Breast epithelium (tissue), 4 donors: ENCODE measurements at regions of chr15 and their contacts with region 1.

Region 1: DNA sequence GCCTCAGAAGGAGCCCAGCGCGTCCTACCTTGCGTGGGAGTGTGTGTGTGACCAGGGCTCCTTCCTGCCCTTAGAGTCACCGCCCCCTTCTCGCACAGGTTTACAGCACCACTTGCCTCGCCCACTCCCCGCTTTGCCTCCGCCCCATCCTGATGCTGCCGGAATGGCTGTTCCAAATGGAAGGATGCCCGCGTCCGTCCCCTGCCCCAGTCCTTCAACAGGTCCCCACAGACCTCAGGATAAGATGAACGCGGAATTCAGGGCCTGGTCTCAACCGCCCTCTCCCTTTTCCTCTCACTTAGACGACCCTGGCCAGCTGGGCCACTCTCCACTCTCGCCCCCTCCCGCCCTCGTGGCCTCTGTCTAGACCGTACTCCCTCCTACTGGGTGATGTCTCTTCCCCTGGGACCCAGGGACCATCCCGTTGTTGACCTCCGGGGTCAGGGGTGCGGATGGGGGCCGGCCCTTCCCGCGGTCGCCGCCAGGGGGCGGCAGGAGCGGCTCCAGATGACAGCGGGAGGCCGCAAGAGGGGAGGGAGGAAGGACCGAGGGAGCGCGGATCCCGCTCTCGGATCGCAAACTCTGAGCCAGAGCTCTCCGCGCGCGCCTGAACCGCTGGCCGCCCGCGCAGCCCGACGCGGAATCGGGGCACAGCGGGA is at the start of gene THSD4:
- DNase-seq: peak; percentile 47 to 76
- H3K4me3 ChIP-seq: peak within 1 kb of the TSS; percentile 44 to 73 (median 66)
- H3K27ac ChIP-seq: peak within 1 kb of the TSS; percentile 81 to 90
- H3K4me1 ChIP-seq: no peaks in the 10 kb centered on the region
- H3K27me3 ChIP-seq: no peaks in the 10 kb centered on the region
- CTCF ChIP-seq: peak; percentile 96 to 98 (median 97)
- POLR2A ChIP-seq: no peak
- total RNA-seq, gene THSD4: 0.64 to 58.7 (median 41.3) TPM

Region 2: GRCh38 chr15:71349736-71350526 is 234.9 kb after region 1 on chr15:
- intact Hi-C with region 1: loop called (anchors 5 kb)
- DNase-seq: no peak
- H3K4me3 ChIP-seq: no peak overlapping the region
- H3K27ac ChIP-seq: no peak overlapping the region
- H3K4me1 ChIP-seq: no peaks in the 10 kb centered on the region
- H3K27me3 ChIP-seq: no peaks in the 10 kb centered on the region
- CTCF ChIP-seq: no peak
- POLR2A ChIP-seq: no peak

Region 3: DNA sequence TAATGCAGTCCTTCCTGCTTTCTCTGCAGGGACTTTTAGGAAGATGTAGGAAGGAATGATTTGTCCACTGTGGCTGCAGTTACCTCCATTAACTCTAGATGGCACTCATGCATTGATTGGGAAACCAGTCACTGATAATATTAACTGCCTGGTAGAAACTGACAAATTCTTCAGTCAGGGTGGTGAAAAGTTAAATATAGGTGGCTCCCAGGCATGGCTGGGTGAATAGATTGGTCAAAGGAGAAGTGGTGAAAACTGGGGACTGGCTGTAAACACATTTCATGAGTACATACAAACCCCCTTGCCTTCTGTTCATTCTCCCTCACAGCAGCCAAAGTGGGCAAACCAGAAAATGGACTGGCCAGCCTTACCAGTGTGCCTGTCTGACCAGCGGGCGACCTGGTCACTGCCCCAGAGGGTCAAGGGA is 333.7 kb after region 1 on chr15:
- intact Hi-C with region 1: loop called (anchors 10 kb)
- DNase-seq: peak in 1 of 2 donors; percentile 50
- H3K4me3 ChIP-seq: no peak overlapping the region
- H3K27ac ChIP-seq: peak overlapping the region; percentile 61 to 84
- H3K4me1 ChIP-seq: peaks cover 0 to 2% of the 10 kb centered on the region in 2 donors
- H3K27me3 ChIP-seq: no peaks in the 10 kb centered on the region
- CTCF ChIP-seq: peak; percentile 93 to 94 (median 93)
- POLR2A ChIP-seq: no peak